CD4-positive, alpha-beta memory T cell (primary cell): ENCODE measurements at regions of chr15 and their contacts with region 1.

Region 1: GRCh38 chr15:68829068-68829467 is 8.4 kb upstream of the ANP32A start:
- DNase-seq: peak in 4 of 5 donors; percentile 12 to 27 (median 24)
- H3K4me3 ChIP-seq: no peak overlapping the region
- H3K4me3 Mint-ChIP-seq: no peak overlapping the region
- H3K27ac ChIP-seq: no peak overlapping the region
- H3K27ac Mint-ChIP-seq: peak overlapping the region in 1 of 7 donors; percentile 31
- H3K4me1 ChIP-seq: peaks cover 4% of the 10 kb centered on the region
- H3K4me1 Mint-ChIP-seq: peaks cover 4 to 13% (median 7%) of the 10 kb centered on the region in 4 donors
- H3K27me3 ChIP-seq: no peaks in the 10 kb centered on the region
- H3K27me3 Mint-ChIP-seq: peaks cover 1 to 4% of the 10 kb centered on the region in 2 donors

Region 2: GRCh38 chr15:67998599-67999122 is 830.4 kb before region 1 on chr15:
- CTCF ChIA-PET with region 1: no interaction called
- POLR2A ChIA-PET with region 1: no interaction called
- intact Hi-C with region 1: no loop called
- DNase-seq: no peak
- H3K4me3 ChIP-seq: no peak overlapping the region
- H3K4me3 Mint-ChIP-seq: no peak overlapping the region
- H3K27ac ChIP-seq: no peak overlapping the region
- H3K27ac Mint-ChIP-seq: no peak overlapping the region
- H3K4me1 ChIP-seq: no peaks in the 10 kb centered on the region
- H3K4me1 Mint-ChIP-seq: no peaks in the 10 kb centered on the region
- H3K27me3 ChIP-seq: no peaks in the 10 kb centered on the region
- H3K27me3 Mint-ChIP-seq: peaks cover 0 to 2% of the 10 kb centered on the region in 2 donors

Region 3: GRCh38 chr15:68706256-68706655 is 122.8 kb before region 1 on chr15:
- CTCF ChIA-PET with region 1: no interaction called
- POLR2A ChIA-PET with region 1: no interaction called
- intact Hi-C with region 1: no loop called
- DNase-seq: no peak
- H3K4me3 ChIP-seq: no peak overlapping the region
- H3K4me3 Mint-ChIP-seq: no peak overlapping the region
- H3K27ac ChIP-seq: no peak overlapping the region
- H3K27ac Mint-ChIP-seq: peak overlapping the region in 1 of 7 donors; percentile 62
- H3K4me1 ChIP-seq: no peaks in the 10 kb centered on the region
- H3K4me1 Mint-ChIP-seq: no peaks in the 10 kb centered on the region
- H3K27me3 ChIP-seq: no peaks in the 10 kb centered on the region
- H3K27me3 Mint-ChIP-seq: peaks cover 3 to 6% of the 10 kb centered on the region in 2 donors

Region 4: DNA sequence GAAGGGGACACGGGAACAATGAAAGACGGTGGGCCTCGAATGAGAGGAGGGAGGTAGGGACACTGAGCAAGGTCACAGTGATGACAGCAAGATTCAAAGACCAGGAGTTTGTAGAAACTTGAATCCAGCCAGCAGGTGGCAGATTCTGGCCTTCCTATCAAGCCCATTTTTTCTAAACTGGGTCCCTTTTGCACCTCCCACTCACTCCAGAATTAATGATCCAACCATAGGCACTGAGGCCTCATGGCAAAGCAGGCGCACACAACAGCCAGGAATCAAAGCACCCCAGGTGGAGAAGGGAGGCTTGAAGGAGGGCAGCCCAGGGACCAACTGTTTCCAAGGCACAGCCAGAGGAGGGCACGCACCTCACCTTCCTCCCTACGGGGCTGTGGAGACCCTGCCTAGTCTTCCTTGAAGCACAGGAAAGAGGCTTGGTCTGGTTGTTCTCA is 98.6 kb before region 1 on chr15:
- CTCF ChIA-PET with region 1: interaction called, 10 read pairs
- POLR2A ChIA-PET with region 1: no interaction called
- intact Hi-C with region 1: loop called (anchors 2 kb)
- DNase-seq: peak in 4 of 5 donors; percentile 6 to 16 (median 12)
- H3K4me3 ChIP-seq: no peak overlapping the region
- H3K4me3 Mint-ChIP-seq: no peak overlapping the region
- H3K27ac ChIP-seq: no peak overlapping the region
- H3K27ac Mint-ChIP-seq: no peak overlapping the region
- H3K4me1 ChIP-seq: no peaks in the 10 kb centered on the region
- H3K4me1 Mint-ChIP-seq: peaks cover 0 to 3% (median 1%) of the 10 kb centered on the region in 4 donors
- H3K27me3 ChIP-seq: no peaks in the 10 kb centered on the region
- H3K27me3 Mint-ChIP-seq: peaks cover 0 to 2% of the 10 kb centered on the region in 2 donors

Region 5: DNA sequence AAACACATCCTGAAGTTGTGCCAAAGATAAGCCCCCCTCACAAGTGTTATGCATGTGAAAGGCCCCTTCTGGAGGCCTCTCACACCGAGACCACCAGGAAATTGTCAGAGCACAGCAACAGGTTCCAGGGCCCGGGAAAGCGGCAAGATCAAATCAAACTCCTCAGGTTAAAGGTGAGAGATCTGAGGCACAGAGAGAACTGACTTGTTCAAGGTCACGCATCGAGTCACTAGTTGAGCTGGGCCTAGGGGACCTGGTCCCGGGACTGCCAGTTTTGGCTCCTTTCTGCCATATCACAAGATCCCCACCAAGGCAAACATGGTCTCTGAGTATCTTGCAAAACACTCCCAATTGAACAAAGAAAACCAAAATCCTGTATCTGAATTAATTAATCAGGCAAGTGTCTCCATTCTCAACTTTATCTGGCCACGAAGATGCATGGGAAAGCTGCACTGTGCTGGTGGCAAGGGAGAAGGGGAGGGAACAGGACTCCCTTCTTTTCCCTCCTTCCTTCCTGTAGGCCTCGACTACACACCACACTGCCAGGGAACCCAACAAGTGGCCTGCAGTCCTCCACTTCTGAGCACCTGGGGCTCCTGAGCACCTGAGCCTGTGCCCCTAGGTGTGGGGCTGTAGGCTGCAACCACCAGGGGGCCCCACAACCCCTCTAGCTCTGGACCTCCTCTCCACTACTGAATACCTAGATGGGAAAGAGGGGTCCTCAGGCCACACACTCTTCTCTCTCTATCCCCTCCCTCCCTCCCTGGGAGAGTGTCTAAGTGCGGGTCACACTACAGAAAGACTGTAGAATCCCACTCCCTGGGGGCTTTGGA is 45.6 kb before region 1 on chr15:
- CTCF ChIA-PET with region 1: interaction called, 84 read pairs
- POLR2A ChIA-PET with region 1: no interaction called
- intact Hi-C with region 1: loop called (anchors 1 kb)
- DNase-seq: peak; percentile 58 to 67 (median 60)
- H3K4me3 ChIP-seq: no peak overlapping the region
- H3K4me3 Mint-ChIP-seq: peak overlapping the region in 1 of 8 donors; percentile 8
- H3K27ac ChIP-seq: no peak overlapping the region
- H3K27ac Mint-ChIP-seq: peak overlapping the region in 6 of 7 donors; percentile 12 to 89 (median 74)
- H3K4me1 ChIP-seq: peaks cover 16% of the 10 kb centered on the region
- H3K4me1 Mint-ChIP-seq: peaks cover 18 to 24% (median 21%) of the 10 kb centered on the region in 4 donors
- H3K27me3 ChIP-seq: no peaks in the 10 kb centered on the region
- H3K27me3 Mint-ChIP-seq: no peaks in the 10 kb centered on the region